IMR-90 (cell line): ENCODE measurements at regions of chr1 and their contacts with region 1.

Region 1: DNA sequence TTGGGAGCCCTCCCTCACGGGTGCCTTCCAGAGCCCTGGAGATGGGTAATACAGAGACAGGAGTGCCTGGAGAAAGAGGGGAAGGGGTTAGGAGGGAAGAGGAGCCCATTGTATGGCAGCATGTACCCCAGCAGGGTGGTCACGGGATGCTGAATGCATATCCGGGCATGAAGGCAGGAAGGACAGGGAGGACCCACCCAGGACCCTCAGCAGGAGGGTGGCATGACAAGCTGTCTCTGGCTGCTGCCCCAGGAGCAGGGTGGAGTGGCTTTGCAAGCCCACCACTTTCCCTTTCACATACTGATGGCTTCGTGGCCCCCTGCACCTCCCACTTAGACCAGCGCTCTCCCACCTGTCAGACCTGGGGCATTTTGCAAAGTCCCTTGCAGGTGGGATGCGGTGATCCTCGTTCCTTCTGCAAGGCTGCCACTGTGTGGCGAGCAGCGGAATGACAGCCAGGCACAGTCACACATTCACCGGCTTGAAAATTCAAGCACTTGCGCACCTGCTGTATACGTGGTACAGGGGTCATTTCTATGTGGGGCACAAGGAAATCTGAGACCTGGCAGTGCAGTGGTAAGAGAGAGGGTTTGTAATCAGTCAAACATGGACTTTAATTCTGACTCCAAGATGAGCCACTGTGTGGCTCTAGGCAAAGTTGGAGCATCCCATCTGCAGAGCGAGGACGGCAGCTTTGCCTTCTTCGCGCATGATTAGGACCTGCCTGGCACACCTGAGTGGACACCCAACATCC is 53.2 kb upstream of the TMEM51 start:
- DNase-seq: peak; percentile 45
- ATAC-seq: peak; percentile 94
- H3K4me3 ChIP-seq: no peak overlapping the region
- H3K27ac ChIP-seq: no peak overlapping the region
- H3K4me1 ChIP-seq: no peaks in the 10 kb centered on the region
- H3K27me3 ChIP-seq: peaks cover 23% of the 10 kb centered on the region; the same call in 1 of the 2 replicates
- CTCF ChIP-seq: peak; percentile 83
- POLR2A ChIP-seq: no peak
- RAD21 ChIP-seq: peak; percentile 89

Region 2: GRCh38 chr1:14113841-14114567 is 986.3 kb before region 1 on chr1:
- CTCF ChIA-PET with region 1: no interaction called
- POLR2A ChIA-PET with region 1: no interaction called
- dilution Hi-C with region 1: no loop called
- in situ Hi-C with region 1: no loop called
- intact Hi-C with region 1: loop called (anchors 2 kb)
- DNase-seq: peak; percentile 13
- ATAC-seq: peak; percentile 63
- H3K4me3 ChIP-seq: no peak overlapping the region
- H3K27ac ChIP-seq: no peak overlapping the region
- H3K4me1 ChIP-seq: no peaks in the 10 kb centered on the region
- H3K27me3 ChIP-seq: no peaks in the 10 kb centered on the region
- CTCF ChIP-seq: no peak
- POLR2A ChIP-seq: no peak
- RAD21 ChIP-seq: no peak

Region 3: DNA sequence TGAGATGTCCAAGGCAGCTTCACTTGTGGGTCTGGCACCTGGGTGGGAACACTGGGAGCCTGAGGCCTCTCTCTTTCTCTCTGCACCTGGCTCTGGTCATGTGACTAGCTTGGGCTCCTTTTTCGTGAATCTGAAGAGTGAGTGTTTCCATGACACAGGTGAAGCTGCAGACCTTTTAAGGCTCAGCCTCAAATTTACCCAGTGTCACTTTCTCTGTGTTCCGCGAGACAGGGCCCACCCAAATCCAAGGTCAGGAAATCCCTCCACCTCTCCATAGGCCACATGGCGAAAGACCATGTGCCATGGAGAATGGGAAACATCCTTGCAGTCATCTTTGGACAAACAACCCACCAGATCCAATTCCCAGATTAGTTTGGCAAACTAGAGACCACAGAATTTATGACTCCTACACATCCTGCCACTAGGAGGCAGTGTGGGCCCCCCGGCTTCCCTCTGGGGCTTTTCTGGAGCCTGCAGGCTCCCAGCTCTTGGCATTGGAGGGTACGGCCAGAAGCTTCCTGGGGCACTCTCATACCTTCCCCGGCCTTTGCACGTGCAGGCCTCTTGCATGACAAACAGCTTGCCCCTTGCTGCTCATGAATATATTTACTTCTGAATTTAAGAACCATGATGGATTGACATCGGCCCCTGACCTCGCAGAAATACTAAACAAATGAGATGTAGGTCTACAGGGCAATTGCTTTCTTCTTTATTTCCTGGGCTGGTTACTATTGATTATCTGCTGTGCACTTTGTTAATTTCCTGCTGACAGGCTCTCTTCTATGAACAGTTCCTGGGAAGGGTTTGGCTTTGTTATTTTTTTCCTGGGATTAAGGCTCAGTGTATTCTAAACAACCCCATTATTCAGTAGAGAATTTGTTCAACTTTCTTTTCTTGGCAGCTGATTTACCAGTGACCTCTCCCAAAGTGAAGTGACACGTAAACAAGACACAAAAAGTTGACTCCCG is 321.1 kb before region 1 on chr1:
- CTCF ChIA-PET with region 1: no interaction called
- POLR2A ChIA-PET with region 1: no interaction called
- dilution Hi-C with region 1: no loop called
- in situ Hi-C with region 1: no loop called
- intact Hi-C with region 1: loop called (anchors 2 kb)
- DNase-seq: peak; percentile 15
- ATAC-seq: peak; percentile 77
- H3K4me3 ChIP-seq: no peak overlapping the region
- H3K27ac ChIP-seq: no peak overlapping the region
- H3K4me1 ChIP-seq: no peaks in the 10 kb centered on the region
- H3K27me3 ChIP-seq: no peaks in the 10 kb centered on the region
- CTCF ChIP-seq: peak; percentile 60
- POLR2A ChIP-seq: no peak
- RAD21 ChIP-seq: peak; percentile 70

Region 4: DNA sequence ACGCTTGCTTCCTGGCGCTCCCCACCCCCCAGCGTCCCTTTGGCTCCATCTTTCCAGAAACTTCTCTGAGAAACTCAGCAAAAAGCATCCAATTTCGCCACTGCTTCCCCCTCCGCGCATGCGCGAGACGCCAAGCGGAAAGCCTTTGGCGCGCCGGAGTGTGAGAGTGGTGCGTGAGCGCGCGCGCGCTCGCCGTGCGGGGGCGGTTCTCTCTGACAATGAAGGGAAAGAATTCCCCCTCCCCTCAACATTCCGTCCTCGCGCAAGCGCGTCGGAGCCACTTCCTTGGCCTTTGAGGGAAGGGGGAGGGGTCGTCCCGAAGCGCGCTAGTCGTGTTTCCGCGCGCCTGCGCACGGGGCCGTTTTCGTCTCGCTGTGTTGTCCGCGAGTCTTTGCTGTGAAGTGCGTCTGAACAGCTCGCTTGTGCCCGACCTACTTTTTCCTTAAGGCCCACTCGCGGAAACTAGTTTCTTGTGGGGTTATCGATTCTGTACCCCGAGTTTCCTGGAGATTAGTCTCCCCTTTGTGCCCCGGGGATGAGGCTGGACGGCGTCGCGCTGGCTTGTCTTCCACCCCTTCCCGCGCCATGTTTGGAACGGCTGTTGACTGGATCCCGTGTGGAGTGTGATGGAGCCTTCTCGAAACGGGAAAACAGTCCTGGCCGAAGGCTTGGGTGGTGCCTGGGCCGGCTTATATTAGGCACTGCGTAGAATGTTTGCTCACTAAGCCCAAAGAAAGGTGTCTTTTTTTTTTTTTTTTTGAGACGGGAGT is 735.6 kb after region 1 on chr1:
- CTCF ChIA-PET with region 1: no interaction called
- POLR2A ChIA-PET with region 1: no interaction called
- dilution Hi-C with region 1: no loop called
- in situ Hi-C with region 1: no loop called
- intact Hi-C with region 1: no loop called
- DNase-seq: peak; percentile 99
- ATAC-seq: peak; percentile 82
- H3K4me3 ChIP-seq: peak overlapping the region; percentile 68
- H3K27ac ChIP-seq: peak overlapping the region; percentile 85
- H3K4me1 ChIP-seq: peaks cover 2% of the 10 kb centered on the region; the same call in 1 of the 2 replicates
- H3K27me3 ChIP-seq: no peaks in the 10 kb centered on the region
- CTCF ChIP-seq: no peak
- POLR2A ChIP-seq: peak; percentile 85
- RAD21 ChIP-seq: no peak